ENCODE measurements at regions of chr7 and their contacts with region 1.

Region 1: GRCh38 chr7:129859183-129859582 is 93.6 kb downstream of the UBE2H start:
- DNase-seq: no peak
- ATAC-seq: no peak
- H3K4me3 ChIP-seq: no peak overlapping the region
- H3K27ac ChIP-seq: no peak overlapping the region
- H3K4me1 ChIP-seq: peaks cover 78% of the 10 kb centered on the region
- H3K27me3 ChIP-seq: no peaks in the 10 kb centered on the region
- CTCF ChIP-seq: no peak

Region 2: DNA sequence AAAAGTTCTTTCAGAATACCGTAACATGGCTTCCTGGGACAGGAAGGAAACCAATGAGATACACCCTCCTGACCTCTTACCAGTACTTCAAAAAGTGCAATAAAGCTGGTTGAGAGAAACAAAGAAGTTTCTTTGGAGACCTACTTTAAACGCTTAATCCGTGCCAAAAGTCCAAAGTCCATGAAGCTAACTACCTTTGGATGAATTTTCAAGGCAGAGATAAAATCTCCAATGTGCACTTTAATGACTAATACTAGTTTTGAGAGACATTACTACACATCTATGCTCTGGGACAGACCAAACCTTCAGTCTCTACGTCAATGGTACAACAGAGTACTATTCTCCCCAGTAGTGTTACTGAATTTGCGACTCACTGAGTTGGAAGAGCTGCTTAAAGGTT is 47.5 kb after region 1 on chr7:
- intact Hi-C with region 1: loop called in 1 of 2 experiments (anchors 10 kb)
- DNase-seq: no peak
- ATAC-seq: peak in 2 of 4 donors; percentile 39 to 48
- H3K4me3 ChIP-seq: no peak overlapping the region
- H3K27ac ChIP-seq: peak overlapping the region; percentile 38
- H3K4me1 ChIP-seq: peaks cover 73% of the 10 kb centered on the region
- H3K27me3 ChIP-seq: no peaks in the 10 kb centered on the region
- CTCF ChIP-seq: no peak

Measured in psoas muscle (tissue), 8 donors.